WTC11 (cell line): ENCODE measurements at regions of chr10 and their contacts with region 1.

Region 1: DNA sequence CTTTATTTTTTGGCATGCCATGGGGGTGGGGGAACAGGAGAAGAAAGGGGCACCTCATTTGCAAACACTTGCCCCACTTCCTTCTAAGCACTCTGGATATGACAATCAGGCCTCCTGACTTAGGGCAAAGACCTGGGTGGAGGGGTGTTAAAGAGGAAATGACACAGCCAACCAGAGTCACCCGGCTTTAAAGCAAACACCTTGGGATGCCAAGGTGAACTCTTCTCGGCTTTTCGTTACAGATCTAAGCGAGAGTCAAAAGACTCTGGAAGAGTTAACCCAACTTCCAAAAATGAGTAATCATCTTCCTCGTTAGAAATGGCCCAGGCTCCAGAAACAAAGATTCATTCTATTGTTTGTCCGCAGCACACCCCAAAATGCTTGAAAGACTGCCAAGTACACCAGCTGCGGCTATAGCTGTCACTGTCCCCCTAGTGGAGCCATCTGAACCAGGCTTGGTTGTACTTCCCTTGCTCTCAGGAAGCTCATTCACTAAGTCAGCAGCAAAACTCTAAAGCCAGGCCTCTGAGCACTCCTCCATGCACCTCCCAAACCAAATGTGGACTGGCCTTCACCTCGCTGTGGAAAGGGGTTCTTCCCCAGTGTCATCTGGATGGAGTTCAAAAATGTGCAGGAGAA is 24.8 kb downstream of the FAM53B start:
- DNase-seq: no peak
- ATAC-seq: peak; percentile 57
- H3K4me3 Mint-ChIP-seq: no peak overlapping the region
- H3K27ac Mint-ChIP-seq: no peak overlapping the region; the same call in 1 of the 2 replicates
- H3K4me1 Mint-ChIP-seq: peaks cover 24% of the 10 kb centered on the region
- H3K27me3 Mint-ChIP-seq: no peaks in the 10 kb centered on the region
- CTCF ChIP-seq: no peak

Region 2: GRCh38 chr10:124660404-124661125 is 58.8 kb before region 1 on chr10:
- CTCF ChIA-PET with region 1: no interaction called
- POLR2A ChIA-PET with region 1: no interaction called
- DNase-seq: no peak
- ATAC-seq: no peak
- H3K4me3 Mint-ChIP-seq: no peak overlapping the region
- H3K27ac Mint-ChIP-seq: peak overlapping the region; percentile 72
- H3K4me1 Mint-ChIP-seq: peaks cover 3% of the 10 kb centered on the region
- H3K27me3 Mint-ChIP-seq: no peaks in the 10 kb centered on the region
- CTCF ChIP-seq: no peak

Region 3: DNA sequence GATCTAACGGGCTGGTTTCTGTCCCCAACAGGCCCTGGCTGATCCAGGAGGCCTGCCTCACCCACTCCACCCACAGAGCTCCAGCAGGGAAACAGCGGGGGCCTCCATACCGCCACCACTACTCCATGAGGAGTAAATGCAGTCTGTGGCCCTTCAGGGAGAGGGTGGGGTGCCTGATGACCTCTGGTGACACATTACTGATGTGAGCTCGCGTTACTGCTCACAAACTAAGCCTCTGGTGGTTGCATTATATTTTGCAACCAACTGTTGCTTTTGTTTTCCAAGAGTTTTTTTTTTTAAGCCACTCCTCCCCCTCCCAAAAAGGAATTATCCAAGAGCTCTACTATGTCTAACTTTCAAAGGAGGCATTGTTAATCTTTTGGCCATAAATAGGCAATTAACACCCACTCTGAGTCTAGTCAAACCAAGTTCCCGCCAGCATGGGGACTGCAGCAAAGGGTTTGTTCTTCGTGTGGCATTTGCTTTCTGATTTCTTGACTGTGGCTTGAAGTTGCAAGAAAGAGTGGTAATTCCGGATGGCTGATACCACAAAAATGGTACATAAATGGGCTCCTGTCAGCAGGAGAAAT is 47.8 kb before region 1 on chr10:
- CTCF ChIA-PET with region 1: interaction called, 16 read pairs
- POLR2A ChIA-PET with region 1: no interaction called
- DNase-seq: no peak
- ATAC-seq: peak; percentile 61
- H3K4me3 Mint-ChIP-seq: no peak overlapping the region
- H3K27ac Mint-ChIP-seq: peak overlapping the region; percentile 67
- H3K4me1 Mint-ChIP-seq: peaks cover 23% of the 10 kb centered on the region
- H3K27me3 Mint-ChIP-seq: no peaks in the 10 kb centered on the region
- CTCF ChIP-seq: no peak

Region 4: DNA sequence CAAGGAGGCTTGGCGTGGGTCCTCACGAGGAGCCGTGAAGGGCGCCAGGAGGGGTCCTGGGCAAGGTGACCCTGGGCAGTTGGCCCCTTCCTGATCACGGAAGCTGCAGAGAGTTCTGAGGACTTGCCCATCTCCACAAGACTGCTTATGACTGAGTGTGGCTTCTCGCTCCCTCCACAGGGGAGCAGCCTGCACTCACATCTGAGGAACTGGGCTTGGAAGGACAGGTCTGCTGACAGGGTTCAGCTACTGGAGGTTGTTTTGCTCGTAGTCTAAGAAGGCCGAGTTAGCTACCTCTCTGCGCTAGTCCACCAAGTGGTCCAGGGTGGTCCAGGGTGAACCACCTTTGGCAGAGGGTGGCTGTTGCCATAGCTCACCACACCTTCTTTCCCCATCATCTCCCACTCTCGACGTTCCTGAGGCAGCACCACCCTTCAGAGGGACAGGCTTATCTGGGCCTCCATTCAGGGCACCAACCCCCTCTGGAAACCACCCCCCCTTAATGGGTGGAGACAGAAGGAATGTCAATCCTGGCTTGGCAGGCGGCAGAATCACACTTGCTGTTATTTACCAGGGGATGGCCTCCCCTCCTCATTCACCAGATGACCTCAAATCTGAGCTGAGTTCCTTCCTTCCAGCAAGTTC is 13.4 kb before region 1 on chr10:
- CTCF ChIA-PET with region 1: interaction called, 46 read pairs
- POLR2A ChIA-PET with region 1: interaction called, 5 read pairs
- DNase-seq: no peak
- ATAC-seq: no peak
- H3K4me3 Mint-ChIP-seq: no peak overlapping the region
- H3K27ac Mint-ChIP-seq: peak overlapping the region; percentile 70; the same call in 1 of the 2 replicates
- H3K4me1 Mint-ChIP-seq: peaks cover 52% of the 10 kb centered on the region
- H3K27me3 Mint-ChIP-seq: no peaks in the 10 kb centered on the region
- CTCF ChIP-seq: no peak

Region 5: GRCh38 chr10:124731551-124731950 is 12.2 kb after region 1 on chr10:
- CTCF ChIA-PET with region 1: interaction called, 11 read pairs
- POLR2A ChIA-PET with region 1: interaction called, 4 read pairs
- DNase-seq: no peak
- ATAC-seq: no peak
- H3K4me3 Mint-ChIP-seq: no peak overlapping the region
- H3K27ac Mint-ChIP-seq: no peak overlapping the region
- H3K4me1 Mint-ChIP-seq: peaks cover 28% of the 10 kb centered on the region
- H3K27me3 Mint-ChIP-seq: no peaks in the 10 kb centered on the region
- CTCF ChIP-seq: no peak